Sigmoid colon (tissue), 7 donors: ENCODE measurements at regions of chr9 and their contacts with region 1.

Region 1: DNA sequence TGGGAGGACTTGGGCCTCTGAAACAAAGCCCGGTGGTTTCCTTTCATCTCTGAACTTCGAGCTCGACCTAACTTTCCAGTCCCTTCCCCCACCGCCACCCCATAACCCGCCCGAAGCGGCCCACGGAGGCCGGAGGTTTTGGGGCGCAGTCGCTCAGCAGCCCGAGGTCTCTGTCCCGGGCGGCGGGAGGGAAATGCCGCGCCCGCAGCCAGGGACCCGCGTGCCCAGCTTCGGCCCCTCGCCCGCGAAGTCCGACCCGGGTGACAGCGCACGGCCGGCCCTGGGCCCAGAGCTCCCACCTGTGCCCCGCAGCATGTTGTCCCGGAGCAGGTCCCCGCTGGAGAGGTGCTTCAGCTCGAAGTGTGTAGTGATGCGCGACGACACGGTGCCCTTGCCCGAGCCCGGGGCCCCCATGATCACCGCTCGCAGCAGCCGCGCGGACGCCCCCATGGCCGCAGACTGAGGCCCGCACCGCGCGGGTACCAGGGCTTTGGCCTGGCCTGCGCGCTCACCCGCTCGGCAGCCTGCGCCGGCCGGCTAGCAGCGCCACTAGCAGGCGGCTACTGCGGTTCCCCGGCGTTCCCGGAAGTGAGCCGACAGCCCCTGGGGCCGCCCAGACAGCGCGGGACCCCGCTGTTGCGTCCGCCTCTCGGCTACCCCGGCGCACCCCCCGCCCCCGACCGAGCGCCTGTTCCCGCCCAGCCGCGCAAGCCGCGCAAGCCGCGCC is at the start of gene AK3:
- DNase-seq: peak; percentile 95
- H3K4me3 ChIP-seq: peak within 1 kb of the TSS; percentile 61 to 98 (median 79)
- H3K27ac ChIP-seq: peak within 1 kb of the TSS; percentile 88 to 97 (median 95)
- H3K4me1 ChIP-seq: peaks cover 0 to 37% (median 28%) of the 10 kb centered on the region in 4 donors
- H3K27me3 ChIP-seq: no peaks in the 10 kb centered on the region
- CTCF ChIP-seq: peak in 1 of 4 experiments; percentile 13
- EP300 ChIP-seq: no peak
- POLR2A ChIP-seq: peak in 1 of 2 donors; percentile 71
- total RNA-seq, gene AK3: 94.1 to 122 (median 105) TPM

Region 2: DNA sequence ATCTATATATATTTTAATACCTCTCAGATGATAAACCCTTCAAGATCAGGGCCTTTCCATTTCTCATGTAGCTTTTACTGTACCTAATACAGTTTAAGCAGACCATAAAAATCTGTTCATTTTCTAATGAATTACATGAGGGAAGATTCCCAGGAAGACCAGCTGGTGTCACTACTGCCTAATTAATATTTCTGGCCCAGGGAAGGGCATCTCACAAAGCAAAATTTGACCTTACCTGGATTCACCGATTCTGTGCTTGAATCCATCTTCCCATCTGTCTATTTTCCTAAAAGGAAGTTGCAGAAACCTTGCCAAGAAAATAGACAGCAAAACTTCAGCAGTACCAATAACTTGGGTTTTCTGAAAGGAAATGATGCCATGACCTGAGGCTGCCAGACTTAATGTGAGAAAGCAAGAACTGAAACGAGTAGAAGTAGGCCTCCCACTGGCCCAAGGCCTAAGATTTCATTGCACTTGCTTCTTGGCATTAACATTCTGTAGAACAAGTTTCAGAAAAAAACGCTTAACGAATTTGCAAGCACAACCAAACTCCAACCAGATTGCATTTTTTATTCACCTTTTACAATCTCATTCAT is 358.0 kb before region 1 on chr9:
- intact Hi-C with region 1: loop called (anchors 10 kb)
- DNase-seq: no peak
- H3K4me3 ChIP-seq: no peak overlapping the region
- H3K27ac ChIP-seq: no peak overlapping the region
- H3K4me1 ChIP-seq: no peaks in the 10 kb centered on the region
- H3K27me3 ChIP-seq: no peaks in the 10 kb centered on the region
- CTCF ChIP-seq: peak in 3 of 4 experiments; percentile 40 to 57 (median 52)
- EP300 ChIP-seq: no peak
- POLR2A ChIP-seq: no peak

Region 3: GRCh38 chr9:4640027-4640426 is 100.8 kb before region 1 on chr9:
- intact Hi-C with region 1: no loop called
- DNase-seq: no peak
- H3K4me3 ChIP-seq: no peak overlapping the region
- H3K27ac ChIP-seq: no peak overlapping the region
- H3K4me1 ChIP-seq: no peaks in the 10 kb centered on the region
- H3K27me3 ChIP-seq: no peaks in the 10 kb centered on the region
- CTCF ChIP-seq: peak; percentile 23 to 62 (median 42)
- EP300 ChIP-seq: no peak
- POLR2A ChIP-seq: no peak

Region 4: GRCh38 chr9:4662108-4662988 is 78.5 kb before region 1 on chr9 and contains the start of gene PLPP6:
- intact Hi-C with region 1: loop called (anchors 1 kb)
- DNase-seq: peak; percentile 93
- H3K4me3 ChIP-seq: peak within 1 kb of the TSS; percentile 85 to 98 (median 92)
- H3K27ac ChIP-seq: peak within 1 kb of the TSS; percentile 81 to 89 (median 88)
- H3K4me1 ChIP-seq: peaks cover 0 to 46% (median 18%) of the 10 kb centered on the region in 4 donors
- H3K27me3 ChIP-seq: no peaks in the 10 kb centered on the region
- CTCF ChIP-seq: peak; percentile 55 to 78 (median 58)
- EP300 ChIP-seq: no peak
- POLR2A ChIP-seq: no peak
- total RNA-seq, gene PLPP6: 3.0 to 6.9 (median 3.7) TPM

Region 5: DNA sequence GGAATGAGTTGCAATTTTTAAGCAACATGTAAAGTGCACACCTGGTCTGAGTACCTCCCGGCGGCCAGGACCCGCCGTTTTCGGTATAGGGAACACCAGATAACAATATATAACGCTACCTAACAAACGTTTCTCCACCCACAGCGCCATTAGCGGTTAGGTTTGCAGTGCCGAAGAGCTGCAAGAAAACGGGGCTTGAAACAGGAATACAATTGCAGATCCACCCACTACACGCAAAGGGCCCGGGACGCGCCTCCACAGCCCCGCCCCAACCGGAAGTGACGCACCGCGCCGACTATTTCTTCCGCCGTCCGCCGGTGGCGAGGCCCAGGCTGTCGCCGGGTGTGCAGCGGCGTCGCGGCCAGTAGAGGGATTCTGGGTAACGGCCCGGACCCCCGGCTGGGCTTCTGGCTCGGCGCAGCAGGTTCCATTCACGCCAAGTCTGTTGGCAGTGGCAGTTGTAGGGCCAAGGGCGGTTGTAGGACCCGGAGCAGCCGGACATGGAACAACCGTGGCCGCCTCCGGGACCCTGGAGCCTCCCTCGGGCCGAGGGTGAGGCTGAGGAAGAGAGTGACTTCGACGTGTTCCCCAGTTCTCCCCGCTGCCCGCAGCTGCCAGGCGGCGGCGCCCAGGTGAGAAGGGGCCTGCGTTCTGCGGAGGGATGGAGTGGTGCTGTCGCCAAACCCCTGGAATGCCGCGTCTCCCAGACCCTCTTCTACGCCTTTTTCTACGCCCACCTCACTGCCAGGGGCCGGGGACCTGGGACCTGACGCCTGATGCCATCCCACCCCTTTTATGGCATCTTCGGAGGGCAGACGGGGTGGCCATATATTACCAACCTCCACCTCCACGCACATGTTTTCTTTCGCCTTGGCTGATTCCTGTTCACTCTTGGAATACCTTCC is 61.3 kb before region 1 on chr9 and contains the start of gene CDC37L1:
- intact Hi-C with region 1: loop called (anchors 1 kb)
- DNase-seq: peak; percentile 99
- H3K4me3 ChIP-seq: peak within 1 kb of the TSS; percentile 69 to 96 (median 82)
- H3K27ac ChIP-seq: peak within 1 kb of the TSS; percentile 93 to 99 (median 98)
- H3K4me1 ChIP-seq: peaks cover 0 to 40% (median 21%) of the 10 kb centered on the region in 4 donors
- H3K27me3 ChIP-seq: no peaks in the 10 kb centered on the region
- CTCF ChIP-seq: peak; percentile 70 to 82 (median 76)
- EP300 ChIP-seq: peak in 2 of 4 donors; percentile 34 to 64
- POLR2A ChIP-seq: peak; percentile 95 to 96
- total RNA-seq, gene CDC37L1: 30.7 to 40.6 (median 33.3) TPM

Region 6: GRCh38 chr9:4792572-4793458 is 52.0 kb after region 1 on chr9 and contains the start of gene RCL1:
- intact Hi-C with region 1: loop called (anchors 5 kb)
- DNase-seq: peak; percentile 97
- H3K4me3 ChIP-seq: peak within 1 kb of the TSS; percentile 83 to 98 (median 87)
- H3K27ac ChIP-seq: peak within 1 kb of the TSS; percentile 77 to 90 (median 82)
- H3K4me1 ChIP-seq: peaks cover 0 to 26% (median 12%) of the 10 kb centered on the region in 4 donors
- H3K27me3 ChIP-seq: no peaks in the 10 kb centered on the region
- CTCF ChIP-seq: no peak
- EP300 ChIP-seq: no peak
- POLR2A ChIP-seq: peak; percentile 16 to 59
- total RNA-seq, gene RCL1: 19.7 to 24.1 (median 21.9) TPM

Region 7: DNA sequence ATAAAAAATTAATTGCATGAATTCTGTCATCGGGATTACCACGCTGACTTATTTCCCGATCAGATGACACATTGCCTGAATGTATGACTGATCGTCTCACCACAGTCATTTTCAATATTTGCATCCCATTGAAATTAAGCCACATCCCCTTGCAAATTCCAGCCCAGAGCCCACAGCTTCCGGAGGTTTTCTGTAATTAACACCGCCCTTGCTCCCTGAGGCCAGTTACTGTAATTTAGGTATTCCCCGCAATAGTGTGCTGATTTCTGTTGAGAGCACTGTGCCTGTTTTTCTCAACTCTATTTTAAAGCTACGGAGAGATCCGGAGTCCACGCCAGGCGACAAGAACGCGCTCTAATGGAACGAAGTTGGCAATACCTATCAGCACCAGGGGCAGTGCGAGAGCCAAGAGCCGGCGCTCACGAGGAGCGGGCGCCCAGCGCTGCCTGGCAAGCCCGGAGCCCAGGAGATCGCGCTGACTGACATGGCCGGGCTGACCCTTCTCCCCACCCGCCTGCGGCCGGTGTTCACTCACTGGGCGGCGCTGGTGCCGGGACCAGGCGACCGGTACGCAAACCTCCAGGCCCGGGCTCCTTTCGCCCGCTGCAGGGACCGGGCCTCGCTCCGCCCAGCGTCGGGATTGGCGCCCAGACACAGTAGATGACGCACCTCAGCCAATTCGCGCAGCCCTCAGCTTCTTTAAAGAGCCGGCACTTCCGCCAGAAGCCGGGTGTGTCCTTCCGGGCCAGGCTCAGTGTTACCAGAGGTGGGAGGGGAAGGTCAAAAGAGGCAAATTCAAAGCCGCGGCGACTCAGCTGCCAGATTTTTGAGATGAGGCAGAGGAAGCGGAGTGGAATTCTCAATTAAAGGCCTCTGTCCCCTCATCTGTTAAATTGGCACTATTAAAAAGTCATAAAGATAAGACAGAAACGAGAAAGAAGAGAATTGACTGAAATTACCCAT is 696.7 kb after region 1 on chr9 and contains the start of gene PLGRKT:
- intact Hi-C with region 1: loop called (anchors 10 kb)
- DNase-seq: peak; percentile 98
- H3K4me3 ChIP-seq: peak within 1 kb of the TSS; percentile 49 to 71 (median 70)
- H3K27ac ChIP-seq: peak within 1 kb of the TSS; percentile 84 to 94 (median 92)
- H3K4me1 ChIP-seq: peaks cover 0 to 16% (median 15%) of the 10 kb centered on the region in 4 donors
- H3K27me3 ChIP-seq: no peaks in the 10 kb centered on the region
- CTCF ChIP-seq: peak in 1 of 4 experiments; percentile 10
- EP300 ChIP-seq: no peak
- POLR2A ChIP-seq: peak; percentile 80 to 89
- total RNA-seq, gene PLGRKT: 14.1 to 25.0 (median 19.7) TPM

Region 8: DNA sequence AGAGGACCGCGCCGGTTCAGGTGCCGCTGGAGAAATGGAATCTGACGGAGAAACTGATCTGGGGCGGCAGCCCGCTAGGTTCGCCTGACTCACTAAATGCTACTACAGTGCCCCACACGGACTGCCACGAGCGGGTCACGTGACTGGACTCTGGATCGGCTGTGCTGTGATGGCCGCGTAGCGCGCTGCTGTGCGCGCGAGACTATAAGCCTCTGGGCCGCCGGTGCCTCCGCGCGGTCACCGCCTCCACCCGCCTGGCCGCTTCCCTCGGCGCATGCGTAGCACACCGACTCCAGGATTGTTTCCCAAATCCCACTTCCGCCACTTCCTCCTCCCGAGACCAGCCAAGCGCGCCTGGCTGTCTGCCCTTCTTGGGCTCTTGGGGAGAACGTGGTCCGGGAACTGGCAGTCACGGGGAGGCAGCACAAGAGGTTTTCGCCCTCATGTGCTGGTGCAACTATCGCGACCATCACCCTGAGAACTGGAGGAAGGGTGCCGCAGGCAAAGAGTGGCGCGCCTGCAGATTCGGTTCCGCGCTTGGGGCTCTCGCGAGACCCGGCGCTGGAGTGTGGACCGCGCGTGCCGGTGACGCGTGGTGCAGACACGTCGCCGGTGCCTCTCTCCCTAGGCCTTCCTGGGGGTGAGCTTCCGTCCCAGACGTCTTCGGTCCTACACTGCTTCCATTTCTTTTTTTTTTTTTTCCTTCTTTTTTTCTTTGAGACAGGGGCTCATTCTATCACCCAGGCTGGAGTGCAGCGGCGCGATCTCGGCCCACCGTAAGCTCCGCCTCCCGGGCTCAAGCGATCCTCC is 1940.6 kb after region 1 on chr9:
- intact Hi-C with region 1: loop called (anchors 10 kb)
- DNase-seq: peak; percentile 99
- H3K4me3 ChIP-seq: peak overlapping the region; percentile 54 to 73 (median 68)
- H3K27ac ChIP-seq: peak overlapping the region; percentile 95 to 98 (median 96)
- H3K4me1 ChIP-seq: peaks cover 0 to 7% (median 7%) of the 10 kb centered on the region in 4 donors
- H3K27me3 ChIP-seq: no peaks in the 10 kb centered on the region
- CTCF ChIP-seq: no peak
- EP300 ChIP-seq: peak in 1 of 4 donors; percentile 4
- POLR2A ChIP-seq: peak; percentile 56 to 65